Testis (tissue), 5 donors: ENCODE measurements at regions of chr1 and their contacts with region 1.

Region 1: GRCh38 chr1:33295450-33296081 is 25.3 kb downstream of the A3GALT2 start:
- DNase-seq: peak; percentile 92
- H3K4me3 ChIP-seq: no peak overlapping the region
- H3K27ac ChIP-seq: no peak overlapping the region
- H3K4me1 ChIP-seq: peaks cover 13% of the 10 kb centered on the region
- H3K27me3 ChIP-seq: no peaks in the 10 kb centered on the region
- CTCF ChIP-seq: peak; percentile 95 to 99 (median 97)
- POLR2A ChIP-seq: no peak

Region 2: GRCh38 chr1:33206340-33206739 is 89.2 kb before region 1 on chr1:
- intact Hi-C with region 1: no loop called
- DNase-seq: no peak
- H3K4me3 ChIP-seq: no peak overlapping the region
- H3K27ac ChIP-seq: no peak overlapping the region
- H3K4me1 ChIP-seq: no peaks in the 10 kb centered on the region
- H3K27me3 ChIP-seq: no peaks in the 10 kb centered on the region
- CTCF ChIP-seq: no peak
- POLR2A ChIP-seq: no peak

Region 3: DNA sequence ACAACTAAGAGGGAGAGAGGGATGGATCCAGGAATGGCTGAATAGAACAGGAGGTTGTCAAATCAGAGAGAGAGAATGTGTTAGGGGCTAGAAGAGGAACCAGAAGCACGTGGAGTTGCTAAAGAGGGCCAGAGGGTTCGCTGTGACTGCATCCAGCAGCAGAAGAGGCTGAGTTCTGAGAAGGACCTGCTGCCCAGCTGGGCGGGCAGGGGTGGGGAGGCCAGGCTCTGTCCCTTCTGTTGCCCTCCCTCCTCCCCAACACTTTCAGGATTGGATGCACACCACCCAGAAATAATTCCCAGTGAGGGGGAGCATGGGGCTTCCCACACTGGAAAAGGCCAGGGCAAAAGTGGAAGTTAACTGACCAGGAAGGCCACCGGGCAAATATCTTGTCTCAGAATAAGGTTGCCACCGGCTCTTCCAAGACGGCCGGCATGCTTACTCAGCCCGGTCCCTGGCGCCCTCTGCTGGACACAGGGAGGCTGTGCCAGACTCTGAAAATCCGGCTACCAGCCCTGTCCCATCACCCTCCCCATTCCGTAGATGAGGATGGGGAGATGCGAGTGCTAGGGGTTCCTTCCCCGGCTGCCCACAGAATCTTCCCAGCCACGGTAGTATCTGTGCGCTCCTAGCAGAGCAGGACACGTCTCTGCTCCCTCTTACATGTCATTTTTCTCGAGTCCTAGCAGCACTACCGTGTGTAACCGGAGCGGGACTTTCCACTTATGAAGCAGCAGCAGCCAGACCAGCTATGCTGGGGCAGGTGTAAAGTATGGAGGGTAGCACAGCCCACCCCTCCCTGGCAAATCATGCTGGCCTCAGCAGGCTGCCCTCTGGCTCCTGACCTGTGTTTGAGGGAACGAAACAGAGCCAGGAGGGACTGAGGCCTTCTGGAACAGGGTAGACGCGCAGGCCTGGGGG is 72.2 kb after region 1 on chr1:
- intact Hi-C with region 1: loop called (anchors 5 kb)
- DNase-seq: peak; percentile 93
- H3K4me3 ChIP-seq: no peak overlapping the region
- H3K27ac ChIP-seq: no peak overlapping the region
- H3K4me1 ChIP-seq: peaks cover 35% of the 10 kb centered on the region
- H3K27me3 ChIP-seq: no peaks in the 10 kb centered on the region
- CTCF ChIP-seq: peak; percentile 88 to 94 (median 89)
- POLR2A ChIP-seq: no peak